Cardiac septum (tissue), 1 donor: ENCODE measurements at regions of chr1 and their contacts with region 1.

Region 1: DNA sequence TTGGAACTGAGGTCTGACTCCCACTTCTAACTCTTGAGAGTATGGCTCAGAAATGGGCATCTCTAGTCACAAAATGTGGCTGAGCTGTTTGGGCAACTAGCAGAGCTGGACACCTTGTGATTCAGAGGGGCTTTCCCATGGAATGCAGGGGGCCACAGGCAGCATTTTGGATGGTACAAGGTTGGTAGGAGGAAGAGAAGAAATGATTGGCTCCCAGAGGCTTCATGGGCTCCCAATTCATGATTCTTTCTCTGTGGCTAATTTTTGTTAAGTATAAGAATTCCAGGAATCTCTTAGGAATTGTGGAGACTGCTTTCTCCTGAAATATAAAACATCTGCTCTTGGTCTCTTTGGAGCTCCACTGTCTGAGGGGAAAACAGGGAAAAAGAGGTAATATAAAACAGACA is 49.7 kb downstream of the PBX1 start:
- DNase-seq: no peak

Region 2: GRCh38 chr1:164565357-164565756 is 43.3 kb before region 1 on chr1:
- intact Hi-C with region 1: loop called (anchors 5 kb)
- DNase-seq: no peak